ENCODE measurements at regions of chr20 and their contacts with region 1.

Region 1: GRCh38 chr20:62010551-62011402 is 54.9 kb downstream of the TAF4 start:
- DNase-seq: peak; percentile 46
- H3K4me3 Mint-ChIP-seq: no peak overlapping the region
- H3K27ac Mint-ChIP-seq: no peak overlapping the region
- H3K4me1 Mint-ChIP-seq: peaks cover 7% of the 10 kb centered on the region
- H3K27me3 Mint-ChIP-seq: no peaks in the 10 kb centered on the region
- CTCF ChIP-seq: peak; percentile 70

Region 2: GRCh38 chr20:62020935-62021701 is 10.3 kb after region 1 on chr20:
- CTCF ChIA-PET with region 1: interaction called, 19 read pairs
- POLR2A ChIA-PET with region 1: no interaction called
- intact Hi-C with region 1: no loop called
- DNase-seq: no peak
- H3K4me3 Mint-ChIP-seq: no peak overlapping the region
- H3K27ac Mint-ChIP-seq: no peak overlapping the region
- H3K4me1 Mint-ChIP-seq: no peaks in the 10 kb centered on the region
- H3K27me3 Mint-ChIP-seq: no peaks in the 10 kb centered on the region
- CTCF ChIP-seq: no peak

Region 3: DNA sequence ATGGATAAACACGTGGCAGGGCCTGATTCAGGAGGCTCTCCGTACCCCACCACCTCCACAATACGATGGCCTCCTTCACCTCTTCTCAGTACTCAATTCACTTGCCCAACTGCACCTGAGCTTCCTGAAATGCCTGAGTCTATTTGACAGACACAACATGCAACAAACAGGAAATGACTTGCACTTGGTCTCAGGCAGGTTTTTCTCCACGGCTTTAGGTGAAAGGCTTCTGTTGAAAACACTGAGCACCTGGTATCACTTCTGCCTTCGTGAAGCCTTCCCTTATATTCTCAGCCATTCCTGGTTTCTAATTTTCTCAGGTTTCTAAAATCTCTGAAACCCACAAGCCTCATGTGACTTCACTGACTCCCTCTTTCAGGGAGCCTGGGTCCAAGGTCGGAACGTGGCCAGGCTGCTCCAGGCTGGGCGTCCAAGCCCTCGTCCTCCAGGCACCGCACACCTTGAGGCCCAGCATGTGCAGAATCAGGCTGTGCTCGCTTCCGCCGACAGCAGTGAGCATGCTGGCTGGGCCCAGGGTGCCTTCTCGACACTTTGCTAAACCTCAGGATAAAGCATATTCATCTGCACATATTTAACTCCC is 20.2 kb after region 1 on chr20:
- CTCF ChIA-PET with region 1: interaction called, 20 read pairs
- POLR2A ChIA-PET with region 1: no interaction called
- intact Hi-C with region 1: no loop called
- DNase-seq: no peak
- H3K4me3 Mint-ChIP-seq: no peak overlapping the region
- H3K27ac Mint-ChIP-seq: no peak overlapping the region
- H3K4me1 Mint-ChIP-seq: peaks cover 18% of the 10 kb centered on the region
- H3K27me3 Mint-ChIP-seq: no peaks in the 10 kb centered on the region
- CTCF ChIP-seq: no peak

Region 4: DNA sequence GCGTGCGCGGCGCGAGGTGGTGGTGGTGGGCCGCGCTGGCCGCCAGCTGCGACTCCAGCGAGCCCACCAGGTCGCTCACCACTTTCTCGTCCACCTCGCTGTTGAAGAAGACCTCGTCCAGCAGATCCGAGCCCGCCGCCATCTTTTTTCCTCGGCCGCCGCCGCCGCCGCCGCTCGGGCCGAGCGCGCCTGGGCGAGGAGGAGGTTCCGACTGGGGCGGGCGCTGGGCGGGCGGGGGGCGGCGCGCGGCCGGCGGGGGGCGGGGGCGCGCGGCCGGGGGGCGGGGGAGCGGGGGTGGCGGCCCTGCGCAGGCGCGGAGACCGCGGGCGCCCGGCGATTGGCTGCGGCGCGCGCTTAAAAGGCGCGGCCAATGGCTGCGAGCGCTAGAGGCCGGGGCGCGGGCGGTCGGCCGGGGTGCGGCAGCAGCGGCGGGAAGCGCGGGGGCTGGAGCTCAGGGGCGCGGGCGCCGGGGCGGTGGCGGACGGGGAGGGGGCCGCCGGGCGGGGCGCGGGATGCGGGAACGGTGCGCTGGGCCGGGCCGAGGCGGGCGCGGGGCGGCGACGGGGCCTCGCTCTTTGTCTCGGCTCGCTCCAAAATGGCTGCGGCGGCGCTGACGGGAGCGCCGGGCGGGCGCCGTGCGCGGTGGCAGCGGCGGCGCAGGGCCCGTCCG is 55.0 kb after region 1 on chr20 and contains the start of gene TAF4:
- CTCF ChIA-PET with region 1: interaction called, 4 read pairs
- POLR2A ChIA-PET with region 1: interaction called, 11 read pairs
- intact Hi-C with region 1: no loop called
- DNase-seq: peak; percentile 70
- H3K4me3 Mint-ChIP-seq: peak within 1 kb of the TSS; percentile 81
- H3K27ac Mint-ChIP-seq: peak within 1 kb of the TSS; percentile 75
- H3K4me1 Mint-ChIP-seq: peaks cover 20% of the 10 kb centered on the region
- H3K27me3 Mint-ChIP-seq: no peaks in the 10 kb centered on the region
- CTCF ChIP-seq: no peak
- total RNA-seq, gene TAF4: 15.9 and 16.1 TPM in 2 replicates

Region 5: GRCh38 chr20:62121776-62122631 is 111.2 kb after region 1 on chr20 and contains the start of gene LSM14B:
- CTCF ChIA-PET with region 1: interaction called, 10 read pairs
- POLR2A ChIA-PET with region 1: interaction called, 8 read pairs
- intact Hi-C with region 1: loop called (anchors 1 kb)
- DNase-seq: peak; percentile 94
- H3K4me3 Mint-ChIP-seq: peak within 1 kb of the TSS; percentile 89
- H3K27ac Mint-ChIP-seq: peak within 1 kb of the TSS; percentile 95
- H3K4me1 Mint-ChIP-seq: peaks cover 10% of the 10 kb centered on the region
- H3K27me3 Mint-ChIP-seq: no peaks in the 10 kb centered on the region
- CTCF ChIP-seq: no peak
- total RNA-seq, gene LSM14B: 33.3 and 35.1 TPM in 2 replicates

Region 6: GRCh38 chr20:62136283-62137091 is 125.7 kb after region 1 on chr20:
- CTCF ChIA-PET with region 1: interaction called, 62 read pairs
- POLR2A ChIA-PET with region 1: interaction called, 9 read pairs
- intact Hi-C with region 1: loop called (anchors 1 kb)
- DNase-seq: peak; percentile 72
- H3K4me3 Mint-ChIP-seq: no peak overlapping the region
- H3K27ac Mint-ChIP-seq: no peak overlapping the region
- H3K4me1 Mint-ChIP-seq: peaks cover 21% of the 10 kb centered on the region
- H3K27me3 Mint-ChIP-seq: no peaks in the 10 kb centered on the region
- CTCF ChIP-seq: peak; percentile 75

Region 7: DNA sequence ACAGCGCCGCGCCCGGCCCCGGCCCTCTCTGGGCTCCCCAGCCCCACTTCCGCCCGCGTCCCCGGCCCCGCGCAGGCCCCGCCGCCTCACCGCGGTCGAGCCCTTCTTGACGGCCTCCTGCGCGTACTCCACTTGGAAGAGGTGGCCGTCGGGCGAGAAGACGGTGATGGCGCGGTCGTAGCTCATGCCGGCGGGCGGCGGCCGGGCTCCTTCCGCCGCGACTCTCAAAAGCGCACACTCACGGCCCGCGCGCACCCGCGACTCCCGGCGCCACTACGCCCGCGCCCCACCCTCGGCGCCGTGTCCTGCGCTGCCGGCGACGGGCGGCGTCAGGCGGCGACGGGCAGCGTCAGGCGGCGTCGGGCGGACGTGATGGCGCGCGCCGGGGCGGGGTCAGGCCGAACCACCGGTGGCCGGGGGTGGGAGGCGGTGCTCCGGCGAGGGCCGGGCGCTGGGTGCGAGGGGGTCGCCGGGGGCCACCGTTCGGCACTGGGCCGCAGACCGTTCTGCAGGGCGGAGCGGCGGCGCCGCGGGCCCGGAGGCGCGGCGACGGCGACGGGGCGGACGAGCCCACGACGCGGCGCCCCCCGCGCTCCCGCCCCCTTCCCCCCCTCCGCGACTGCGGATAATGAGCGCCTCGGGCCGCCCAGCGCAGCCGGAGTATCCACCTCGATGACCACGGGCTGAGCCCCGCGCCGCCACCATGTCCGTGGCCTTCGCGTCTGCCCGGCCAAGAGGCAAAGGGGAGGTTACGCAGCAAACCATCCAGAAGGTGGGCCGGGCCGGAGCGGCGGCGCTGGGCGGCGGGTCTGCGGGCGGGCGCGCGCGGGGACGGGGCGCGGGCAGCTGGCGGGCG is 132.6 kb after region 1 on chr20 and contains the starts of genes PSMA7 and SS18L1:
- CTCF ChIA-PET with region 1: interaction called, 62 read pairs
- POLR2A ChIA-PET with region 1: interaction called, 9 read pairs
- intact Hi-C with region 1: no loop called
- DNase-seq: peak; percentile 84
- H3K4me3 Mint-ChIP-seq: peak within 1 kb of the TSS; percentile 84
- H3K27ac Mint-ChIP-seq: peak within 1 kb of the TSS; percentile 97
- H3K4me1 Mint-ChIP-seq: peaks cover 31% of the 10 kb centered on the region
- H3K27me3 Mint-ChIP-seq: no peaks in the 10 kb centered on the region
- CTCF ChIP-seq: no peak
- total RNA-seq, gene PSMA7: 362 and 419 TPM in 2 replicates
- total RNA-seq, gene SS18L1: 16.1 and 17.9 TPM in 2 replicates

Measured in MCF 10A (cell line).